ENCODE measurements at regions of chr19 and their contacts with region 1.

Region 1: GRCh38 chr19:44113138-44113783 is at the start of gene ZNF225:
- DNase-seq: peak; percentile 95 to 97
- ATAC-seq: peak; percentile 99
- H3K4me3 ChIP-seq: peak within 1 kb of the TSS; percentile 84 to 97
- H3K27ac ChIP-seq: peak within 1 kb of the TSS in 1 of 2 donors; percentile 88
- H3K4me1 ChIP-seq: no peaks in the 10 kb centered on the region
- H3K27me3 ChIP-seq: no peaks in the 10 kb centered on the region
- total RNA-seq, gene ZNF225: 4.5 to 8.8 TPM

Region 2: DNA sequence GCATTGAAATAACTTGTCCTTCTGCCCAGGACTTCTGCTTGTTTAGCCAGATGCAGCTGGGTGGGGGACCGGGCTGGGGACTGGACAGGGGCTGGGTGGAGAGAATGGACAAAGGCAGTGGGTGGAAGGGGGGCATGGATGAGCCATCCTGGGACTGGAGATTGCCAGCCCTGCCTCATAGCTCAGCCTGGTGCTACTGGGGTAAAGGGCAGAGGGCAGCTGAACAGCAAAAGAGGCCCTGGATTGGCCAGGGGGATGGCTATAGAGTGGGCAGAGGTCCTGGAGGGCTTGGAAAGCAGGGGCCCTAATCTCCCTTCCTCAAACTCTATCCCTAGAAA is 425.6 kb before region 1 on chr19:
- intact Hi-C with region 1: no loop called
- DNase-seq: no peak
- ATAC-seq: no peak
- H3K4me3 ChIP-seq: no peak overlapping the region
- H3K27ac ChIP-seq: no peak overlapping the region
- H3K4me1 ChIP-seq: no peaks in the 10 kb centered on the region
- H3K27me3 ChIP-seq: no peaks in the 10 kb centered on the region

Region 3: GRCh38 chr19:44002566-44003460 is 110.4 kb before region 1 on chr19 and contains the start of gene ZNF230:
- intact Hi-C with region 1: loop called in 1 of 2 experiments (anchors 5 kb)
- DNase-seq: peak; percentile 93 to 94
- ATAC-seq: peak; percentile 99
- H3K4me3 ChIP-seq: peak within 1 kb of the TSS; percentile 83 to 86
- H3K27ac ChIP-seq: no peak within 1 kb of the TSS
- H3K4me1 ChIP-seq: peaks cover 0 to 3% of the 10 kb centered on the region in 2 donors
- H3K27me3 ChIP-seq: no peaks in the 10 kb centered on the region
- total RNA-seq, gene ZNF230: 4.2 to 6.0 TPM

Region 4: GRCh38 chr19:44071824-44072542 is 41.3 kb before region 1 on chr19 and contains the start of gene ZNF284:
- intact Hi-C with region 1: no loop called
- DNase-seq: peak; percentile 92 to 93
- ATAC-seq: peak; percentile 98
- H3K4me3 ChIP-seq: peak within 1 kb of the TSS; percentile 42 to 95
- H3K27ac ChIP-seq: peak within 1 kb of the TSS in 1 of 2 donors; percentile 56
- H3K4me1 ChIP-seq: peaks cover 0 to 5% of the 10 kb centered on the region in 2 donors
- H3K27me3 ChIP-seq: no peaks in the 10 kb centered on the region
- total RNA-seq, gene ZNF284: 2.7 to 3.7 TPM

Region 5: DNA sequence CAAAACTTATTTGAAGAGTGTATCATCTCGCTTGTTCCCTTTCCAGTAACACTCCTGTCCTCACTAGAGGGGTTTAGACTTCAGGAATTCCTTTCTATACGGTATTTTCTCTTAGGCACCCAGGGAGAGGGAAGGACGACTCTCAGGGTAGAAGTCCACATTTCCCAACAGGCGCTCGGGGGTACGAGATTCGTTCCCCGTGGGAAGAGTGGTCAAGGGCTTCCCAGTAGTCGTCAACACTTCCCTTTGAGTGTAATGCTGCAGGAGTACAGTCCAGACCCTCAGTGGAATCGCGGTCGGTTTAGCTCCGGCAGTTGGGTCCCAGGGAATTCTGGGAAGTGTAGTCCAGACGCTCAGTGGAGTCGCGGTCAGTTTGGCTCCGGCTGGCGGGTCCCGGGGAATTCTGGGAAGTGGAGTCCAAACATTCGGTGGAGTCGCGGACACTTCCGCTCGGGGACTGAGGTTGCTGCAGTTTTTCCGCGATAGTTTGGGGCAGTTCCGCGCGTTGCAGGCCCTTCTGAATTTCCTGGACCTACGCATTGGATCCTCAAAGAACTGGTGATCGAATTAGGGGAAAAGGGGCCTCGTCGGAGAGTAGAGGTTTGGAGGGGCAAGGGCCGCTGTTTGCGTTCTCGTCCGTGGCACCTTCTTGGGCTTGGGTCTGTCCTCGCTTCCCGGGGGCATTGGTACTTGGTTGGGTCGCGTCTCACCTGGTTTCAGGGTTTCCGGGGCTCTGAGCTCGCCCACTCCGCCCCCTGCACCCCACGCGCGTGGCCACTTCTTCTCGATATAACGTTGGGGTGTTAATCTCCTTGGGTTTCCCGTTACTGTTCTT is 19.1 kb before region 1 on chr19 and contains the start of gene ZNF224:
- intact Hi-C with region 1: loop called in 1 of 2 experiments (anchors 2 kb)
- DNase-seq: peak; percentile 95 to 96
- ATAC-seq: peak; percentile 99
- H3K4me3 ChIP-seq: peak within 1 kb of the TSS; percentile 54 to 85
- H3K27ac ChIP-seq: peak within 1 kb of the TSS in 1 of 2 donors; percentile 58
- H3K4me1 ChIP-seq: no peaks in the 10 kb centered on the region
- H3K27me3 ChIP-seq: no peaks in the 10 kb centered on the region
- total RNA-seq, gene ZNF224: 27.3 to 42.2 TPM

Region 6: GRCh38 chr19:44141191-44142058 is 28.2 kb after region 1 on chr19 and contains the start of gene ZNF234:
- intact Hi-C with region 1: no loop called
- DNase-seq: peak; percentile 92 to 93
- ATAC-seq: peak; percentile 92
- H3K4me3 ChIP-seq: peak within 1 kb of the TSS; percentile 67 to 89
- H3K27ac ChIP-seq: peak within 1 kb of the TSS in 1 of 2 donors; percentile 78
- H3K4me1 ChIP-seq: no peaks in the 10 kb centered on the region
- H3K27me3 ChIP-seq: no peaks in the 10 kb centered on the region
- total RNA-seq, gene ZNF234: 9.6 to 18.5 TPM

Region 7: GRCh38 chr19:44151491-44151890 is 38.2 kb after region 1 on chr19:
- intact Hi-C with region 1: no loop called
- DNase-seq: no peak
- ATAC-seq: no peak
- H3K4me3 ChIP-seq: no peak overlapping the region
- H3K27ac ChIP-seq: no peak overlapping the region
- H3K4me1 ChIP-seq: no peaks in the 10 kb centered on the region
- H3K27me3 ChIP-seq: no peaks in the 10 kb centered on the region

Region 8: GRCh38 chr19:44164673-44165512 is 51.6 kb after region 1 on chr19 and contains the start of gene ZNF226:
- intact Hi-C with region 1: loop called (anchors 2 to 10 kb)
- DNase-seq: peak; percentile 91 to 93
- ATAC-seq: peak; percentile 99
- H3K4me3 ChIP-seq: peak within 1 kb of the TSS; percentile 54 to 87
- H3K27ac ChIP-seq: peak within 1 kb of the TSS; percentile 60 to 85
- H3K4me1 ChIP-seq: peaks cover 2 to 4% of the 10 kb centered on the region in 2 donors
- H3K27me3 ChIP-seq: no peaks in the 10 kb centered on the region
- total RNA-seq, gene ZNF226: 15.8 to 23.6 TPM

Measured in aorta (tissue), 5 donors.